ENCODE measurements at regions of chr6 and their contacts with region 1.

Region 1: DNA sequence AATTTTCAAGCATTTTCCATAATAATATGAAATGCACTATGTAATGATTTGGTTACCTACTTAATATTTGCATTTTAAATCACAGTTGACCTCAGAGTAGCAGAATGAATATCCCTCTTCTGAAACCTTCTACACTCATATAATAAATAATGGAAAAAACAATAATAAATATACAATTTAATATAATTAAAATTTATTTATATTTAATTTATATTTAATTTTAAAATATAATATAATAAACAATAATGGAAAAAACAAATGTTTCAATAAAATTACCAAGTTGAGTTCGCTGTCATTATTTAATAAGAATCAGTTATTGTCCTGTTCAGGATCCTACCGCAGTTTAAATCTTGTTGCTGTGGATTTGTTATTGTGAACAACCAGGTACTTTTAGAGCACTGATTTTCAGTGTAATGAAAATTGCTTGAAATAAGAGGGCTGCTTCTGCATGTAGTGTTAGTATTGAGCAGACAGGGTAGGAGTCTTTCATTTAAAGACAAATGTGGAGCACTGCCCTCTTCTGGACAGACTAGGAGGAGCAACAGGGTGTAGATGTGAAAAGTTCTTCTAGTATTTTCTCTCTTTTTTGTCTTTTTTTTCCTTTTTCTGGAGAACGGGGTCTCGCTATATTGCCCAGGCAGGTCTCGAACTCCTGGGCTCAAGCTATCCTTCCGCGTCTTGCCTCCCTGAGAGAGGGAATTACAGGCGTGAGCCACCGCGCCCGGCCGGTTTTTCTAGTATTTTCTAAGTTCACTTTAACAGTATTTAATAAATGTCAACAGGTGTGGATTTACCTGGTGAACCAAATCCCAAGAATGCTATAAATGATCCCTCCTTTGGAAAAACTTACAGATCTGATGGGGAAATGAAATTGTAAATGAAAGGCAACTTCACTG is 13.6 kb downstream of the TRAPPC3L start:
- DNase-seq: no peak
- H3K4me3 ChIP-seq: no peak overlapping the region
- CTCF ChIP-seq: peak; percentile 57

Region 2: GRCh38 chr6:116217069-116217468 is 314.9 kb before region 1 on chr6:
- CTCF ChIA-PET with region 1: interaction called, 22 read pairs
- POLR2A ChIA-PET with region 1: no interaction called
- DNase-seq: no peak
- H3K4me3 ChIP-seq: no peak overlapping the region
- CTCF ChIP-seq: peak; percentile 30

Region 3: DNA sequence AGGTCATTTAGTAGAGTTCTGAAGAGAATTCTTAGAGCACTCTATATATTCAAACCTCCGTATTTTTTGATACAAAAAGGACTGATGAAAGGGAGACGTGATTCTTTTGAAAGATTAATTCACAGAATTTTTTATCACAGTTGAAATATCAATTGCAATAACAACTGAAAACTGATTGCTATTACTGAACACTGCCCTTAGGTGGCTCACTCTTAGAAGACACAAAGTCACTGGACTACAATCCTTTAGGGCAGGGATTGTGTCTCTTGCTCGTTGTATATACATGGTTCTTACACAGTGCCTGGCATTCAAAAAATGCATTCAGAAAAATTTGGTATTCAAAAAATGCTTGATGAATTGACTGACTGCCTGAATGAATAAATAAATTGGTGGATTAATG is 87.8 kb before region 1 on chr6:
- CTCF ChIA-PET with region 1: interaction called, 14 read pairs
- POLR2A ChIA-PET with region 1: no interaction called
- DNase-seq: no peak
- H3K4me3 ChIP-seq: no peak overlapping the region
- CTCF ChIP-seq: peak; percentile 56

Region 4: GRCh38 chr6:116518621-116519368 is 13.1 kb before region 1 on chr6:
- CTCF ChIA-PET with region 1: interaction called, 41 read pairs
- POLR2A ChIA-PET with region 1: no interaction called
- DNase-seq: no peak
- H3K4me3 ChIP-seq: no peak overlapping the region
- CTCF ChIP-seq: no peak

Region 5: GRCh38 chr6:116556065-116556464 is 24.1 kb after region 1 on chr6:
- CTCF ChIA-PET with region 1: interaction called, 188 read pairs
- POLR2A ChIA-PET with region 1: interaction called, 3 read pairs
- DNase-seq: no peak
- H3K4me3 ChIP-seq: no peak overlapping the region
- CTCF ChIP-seq: no peak

Region 6: DNA sequence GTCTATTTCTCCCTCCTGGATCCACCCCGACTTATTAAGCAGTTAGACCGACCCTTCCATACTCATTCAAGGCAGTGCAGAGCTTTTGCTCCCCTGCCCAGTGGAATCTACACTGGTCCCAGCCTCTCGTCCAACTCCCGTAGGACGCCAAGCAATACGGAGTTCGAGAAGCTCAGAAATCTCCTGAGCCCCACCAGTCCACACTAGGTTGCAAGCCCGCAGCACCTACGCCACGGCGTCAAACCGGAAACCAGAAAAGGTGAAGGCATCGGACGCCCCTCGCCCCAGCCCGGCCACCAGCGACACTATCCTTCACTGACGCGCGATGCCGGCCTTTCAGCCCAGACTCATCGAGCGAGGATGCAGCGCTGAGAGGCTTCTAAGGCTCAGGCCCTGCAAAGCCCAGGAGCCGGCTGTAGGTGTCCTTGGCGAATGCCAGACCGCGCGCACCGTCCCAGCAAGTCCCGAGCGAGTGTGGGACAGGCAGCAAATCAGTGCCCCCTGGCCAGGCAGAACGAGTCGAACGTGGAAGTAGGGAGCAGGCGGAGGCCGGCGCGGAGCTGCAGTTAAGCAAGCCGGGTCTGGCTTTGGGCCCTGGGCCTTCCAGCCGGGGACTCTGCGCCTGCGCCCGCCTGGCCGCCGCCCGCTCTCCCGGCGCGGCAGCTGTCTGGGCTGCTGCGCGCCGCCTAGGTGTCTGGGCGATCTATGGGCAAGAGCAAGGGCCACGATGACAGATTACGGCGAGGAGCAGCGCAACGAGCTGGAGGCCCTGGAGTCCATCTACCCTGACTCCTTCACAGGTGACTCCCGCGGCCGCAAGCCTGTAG is 39.1 kb after region 1 on chr6 and contains the start of gene RWDD1:
- CTCF ChIA-PET with region 1: interaction called, 188 read pairs
- POLR2A ChIA-PET with region 1: no interaction called
- DNase-seq: peak; percentile 98
- H3K4me3 ChIP-seq: peak within 1 kb of the TSS; percentile 94
- CTCF ChIP-seq: peak; percentile 2